Vagina (tissue), 2 donors: ENCODE measurements at regions of chr11 and their contacts with region 1.

Region 1: GRCh38 chr11:7665473-7666291 is 7.6 kb downstream of the CYB5R2 start:
- DNase-seq: no peak
- H3K4me3 ChIP-seq: no peak overlapping the region
- H3K27ac ChIP-seq: no peak overlapping the region
- H3K4me1 ChIP-seq: no peaks in the 10 kb centered on the region
- H3K27me3 ChIP-seq: no peaks in the 10 kb centered on the region
- CTCF ChIP-seq: peak; percentile 57 to 83 (median 64)
- POLR2A ChIP-seq: no peak

Region 2: GRCh38 chr11:7571640-7572000 is 94.1 kb before region 1 on chr11:
- intact Hi-C with region 1: loop called (anchors 5 kb)
- DNase-seq: no peak
- H3K4me3 ChIP-seq: no peak overlapping the region
- H3K27ac ChIP-seq: peak overlapping the region; percentile 40
- H3K4me1 ChIP-seq: peaks cover 25% of the 10 kb centered on the region
- H3K27me3 ChIP-seq: no peaks in the 10 kb centered on the region
- CTCF ChIP-seq: peak; percentile 87 to 91 (median 87)
- POLR2A ChIP-seq: no peak

Region 3: DNA sequence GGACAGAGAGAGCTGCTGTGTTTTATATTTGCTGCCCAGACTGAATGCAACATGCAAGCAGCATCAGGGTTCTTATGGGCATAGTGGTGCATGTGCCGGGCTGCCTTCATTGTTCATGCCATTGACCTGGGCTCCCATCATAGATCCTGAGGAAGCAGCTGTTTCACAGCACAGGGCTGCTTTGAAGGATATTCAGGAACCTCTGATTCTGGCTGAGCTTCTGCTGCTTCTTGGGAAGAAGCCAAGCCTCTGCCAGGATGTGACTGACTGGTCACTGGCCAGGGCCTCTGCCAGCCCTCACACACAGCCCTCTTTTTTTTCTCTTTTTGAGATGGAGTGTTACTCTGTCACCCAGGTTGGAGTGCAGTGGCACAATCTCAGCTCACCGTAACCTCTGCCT is 35.7 kb before region 1 on chr11:
- intact Hi-C with region 1: no loop called
- DNase-seq: no peak
- H3K4me3 ChIP-seq: no peak overlapping the region
- H3K27ac ChIP-seq: no peak overlapping the region
- H3K4me1 ChIP-seq: no peaks in the 10 kb centered on the region
- H3K27me3 ChIP-seq: no peaks in the 10 kb centered on the region
- CTCF ChIP-seq: no peak
- POLR2A ChIP-seq: no peak